ENCODE measurements at regions of chrX and their contacts with region 1.

Region 1: GRCh38 chrX:46376246-46376885 is 168.9 kb downstream of the ZNF674 start:
- DNase-seq: no peak
- ATAC-seq: peak in 7 of 8 donors; percentile 38 to 79 (median 68)
- H3K4me3 ChIP-seq: no peak overlapping the region
- H3K27ac ChIP-seq: no peak overlapping the region
- H3K4me1 ChIP-seq: no peaks in the 10 kb centered on the region
- H3K27me3 ChIP-seq: peaks cover 0 to 9% (median 0%) of the 10 kb centered on the region in 7 donors
- CTCF ChIP-seq: peak in 6 of 9 donors; percentile 29 to 47 (median 38)

Region 2: DNA sequence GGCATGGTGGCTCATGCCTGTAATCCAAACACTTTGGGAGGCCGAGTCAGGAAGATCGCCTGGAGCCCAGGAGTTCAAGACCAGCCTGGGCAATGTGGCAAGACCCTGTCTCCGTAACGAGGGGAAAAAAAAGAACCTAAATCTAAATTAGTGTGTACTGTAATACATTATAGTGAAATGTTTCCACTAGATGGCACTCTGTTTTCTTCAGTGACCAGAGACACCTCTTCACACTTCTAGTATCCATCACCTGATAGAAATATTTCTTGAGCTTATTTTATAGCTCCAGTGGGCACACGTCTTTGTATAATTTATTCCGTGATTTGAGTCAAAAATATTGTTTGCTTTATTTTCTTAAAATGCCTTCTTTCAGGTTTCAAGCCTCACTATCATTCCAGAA is 574.8 kb before region 1 on chrX:
- intact Hi-C with region 1: loop called in 1 of 10 experiments (anchors 10 kb)
- DNase-seq: no peak
- ATAC-seq: peak in 4 of 8 donors; percentile 35 to 46 (median 46)
- H3K4me3 ChIP-seq: peak overlapping the region in 1 of 10 donors; percentile 15
- H3K27ac ChIP-seq: peak overlapping the region in 2 of 10 donors; percentile 15 to 55
- H3K4me1 ChIP-seq: peaks cover 0 to 39% (median 0%) of the 10 kb centered on the region in 9 donors
- H3K27me3 ChIP-seq: peaks cover 0 to 79% (median 0%) of the 10 kb centered on the region in 7 donors
- CTCF ChIP-seq: peak in 7 of 9 donors; percentile 35 to 53 (median 43)

Measured in heart right ventricle (tissue), 16 donors.